Dorsolateral prefrontal cortex (tissue), 120 donors: ENCODE measurements at regions of chr14 and their contacts with region 1.

Region 1: DNA sequence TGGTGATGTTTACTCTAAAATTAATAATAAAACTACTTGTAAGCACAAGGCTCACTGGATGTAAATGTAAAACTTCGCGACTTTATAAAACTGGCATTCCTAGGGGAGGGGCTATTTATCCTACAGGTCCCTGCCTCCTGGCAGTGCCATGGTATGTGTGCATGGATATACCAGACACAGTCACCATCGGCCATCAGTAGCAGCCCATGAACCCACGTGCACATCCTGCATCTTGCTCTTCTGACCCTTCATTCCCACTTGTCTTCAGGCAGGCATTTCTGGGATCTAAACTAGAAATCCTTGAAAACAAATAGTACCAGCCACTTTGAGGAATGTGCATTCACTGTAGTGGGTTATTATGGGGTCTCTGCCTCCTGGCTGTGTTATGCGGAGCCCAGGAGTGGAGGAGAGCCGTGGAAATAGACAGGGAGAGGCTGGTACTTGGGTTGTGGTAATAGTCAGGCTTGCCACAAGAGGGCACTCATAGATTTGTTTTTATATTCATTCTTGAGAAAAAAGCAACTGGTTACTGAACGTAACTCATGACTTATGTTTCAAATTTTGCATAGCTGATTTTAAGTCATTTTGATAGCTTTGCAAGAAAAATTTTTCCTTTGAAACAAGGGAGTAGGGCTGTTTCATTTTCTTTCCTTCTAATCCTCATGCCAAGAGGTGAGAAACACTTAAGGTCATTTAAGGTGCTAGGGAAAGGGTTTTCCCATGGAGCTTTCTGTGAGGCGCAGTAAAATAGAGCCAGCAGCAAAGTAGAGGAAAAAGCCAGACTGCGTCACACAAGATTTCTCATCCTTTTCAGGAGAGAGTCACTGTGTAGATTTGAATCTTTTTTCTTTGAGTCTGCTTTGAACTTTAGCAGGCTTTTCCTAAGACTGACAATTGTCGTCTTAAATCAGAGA is 17.4 kb upstream of the GALNT16 start:
- DNase-seq: peak in 3 of 10 donors; percentile 47 to 77 (median 60)
- H3K4me3 ChIP-seq: peak overlapping the region in 1 of 59 donors; percentile 28
- H3K27ac ChIP-seq: peak overlapping the region in 5 of 59 donors; percentile 0 to 24 (median 8)
- H3K27me3 ChIP-seq: no peaks in the 10 kb centered on the region
- CTCF ChIP-seq: peak; percentile 64 to 95 (median 86)

Region 2: GRCh38 chr14:69460093-69460701 is 217.6 kb after region 1 on chr14:
- intact Hi-C with region 1: loop called in 1 of 2 experiments (anchors 1 kb)
- DNase-seq: peak in 9 of 10 donors; percentile 50 to 77 (median 62)
- H3K4me3 ChIP-seq: no peak overlapping the region
- H3K27ac ChIP-seq: no peak overlapping the region
- H3K27me3 ChIP-seq: no peaks in the 10 kb centered on the region
- CTCF ChIP-seq: peak; percentile 64 to 91 (median 78)